ENCODE measurements at regions of chr12 and their contacts with region 1.

Region 1: DNA sequence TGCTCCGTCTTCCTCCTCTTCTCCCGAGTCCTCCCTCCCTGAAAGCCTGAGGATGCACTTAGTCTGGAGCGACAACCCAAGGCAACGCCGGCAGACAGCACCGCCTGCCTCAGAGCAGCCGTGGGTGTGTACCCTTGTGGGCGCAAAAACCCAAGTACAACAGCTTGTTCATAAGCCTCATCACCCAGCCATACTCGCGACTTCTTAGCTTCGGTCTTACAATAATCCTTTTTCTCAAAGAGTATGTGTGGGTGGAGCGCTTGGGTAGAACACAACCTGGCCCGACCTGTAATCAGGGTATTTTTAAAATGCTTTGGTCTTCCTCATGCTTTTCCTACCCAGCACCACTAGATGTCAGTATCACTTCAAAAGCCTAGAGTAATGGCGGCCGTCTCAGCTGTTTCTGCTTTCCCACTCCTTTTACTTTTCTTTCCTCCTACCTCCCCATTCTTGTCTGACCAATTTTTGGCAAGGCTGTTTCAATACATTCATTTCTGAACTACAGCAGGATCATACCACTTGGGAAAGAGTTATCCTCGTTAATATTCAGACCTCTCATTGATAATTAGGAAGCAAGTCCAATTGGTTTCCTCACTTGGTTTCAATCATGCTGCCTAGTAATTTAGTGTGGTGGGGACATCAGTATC is 198.9 kb downstream of the EPS8 start:
- DNase-seq: peak; percentile 56
- ATAC-seq: peak; percentile 98
- H3K4me3 Mint-ChIP-seq: peak overlapping the region; percentile 72
- H3K27ac Mint-ChIP-seq: peak overlapping the region; percentile 75
- H3K4me1 Mint-ChIP-seq: peaks cover 10% of the 10 kb centered on the region
- H3K27me3 Mint-ChIP-seq: no peaks in the 10 kb centered on the region
- CTCF ChIP-seq: peak; percentile 79

Region 2: DNA sequence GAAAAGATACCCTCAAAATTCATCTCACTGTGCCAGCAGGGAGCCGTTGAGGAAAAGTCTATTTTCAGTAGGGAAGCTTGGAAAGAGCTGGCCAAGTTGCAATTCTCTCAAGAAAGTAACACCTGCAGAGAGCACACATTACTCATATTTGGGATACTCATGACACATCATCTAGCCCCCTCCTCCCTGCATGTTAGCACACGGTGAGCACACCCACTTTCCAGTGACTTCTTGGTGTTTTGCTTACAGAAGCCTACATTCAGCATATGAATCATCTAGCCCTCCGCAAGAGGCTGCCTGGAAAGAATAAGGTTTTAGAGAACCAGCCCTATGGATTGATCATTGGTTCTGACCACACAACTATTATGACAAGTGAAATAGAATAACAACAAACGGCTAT is 143.5 kb before region 1 on chr12:
- CTCF ChIA-PET with region 1: no interaction called
- POLR2A ChIA-PET with region 1: no interaction called
- intact Hi-C with region 1: no loop called
- DNase-seq: peak; percentile 1
- ATAC-seq: peak; percentile 42
- H3K4me3 Mint-ChIP-seq: no peak overlapping the region
- H3K27ac Mint-ChIP-seq: no peak overlapping the region
- H3K4me1 Mint-ChIP-seq: no peaks in the 10 kb centered on the region
- H3K27me3 Mint-ChIP-seq: peaks cover 3% of the 10 kb centered on the region
- CTCF ChIP-seq: no peak

Region 3: DNA sequence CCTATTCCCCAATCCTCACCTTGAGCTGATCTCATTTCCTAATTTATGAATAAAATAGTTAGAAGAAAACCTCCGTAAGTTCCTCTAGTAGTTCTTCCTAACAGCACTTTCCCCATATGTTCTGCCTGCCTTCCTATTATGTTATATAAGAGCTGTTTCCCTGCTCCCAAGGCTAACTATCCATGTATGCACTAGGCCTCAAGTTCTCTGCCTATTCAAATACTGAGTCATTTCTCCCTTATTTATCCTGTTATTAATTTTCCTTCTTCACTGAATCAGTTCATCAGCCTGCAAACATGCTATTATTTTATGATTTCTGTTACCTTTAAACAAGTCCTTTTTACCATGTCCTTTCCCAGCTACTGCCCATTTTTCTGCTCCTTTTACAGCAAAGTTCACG is 34.8 kb after region 1 on chr12:
- CTCF ChIA-PET with region 1: no interaction called
- POLR2A ChIA-PET with region 1: no interaction called
- intact Hi-C with region 1: no loop called
- DNase-seq: no peak
- ATAC-seq: no peak
- H3K4me3 Mint-ChIP-seq: no peak overlapping the region
- H3K27ac Mint-ChIP-seq: no peak overlapping the region
- H3K4me1 Mint-ChIP-seq: no peaks in the 10 kb centered on the region
- H3K27me3 Mint-ChIP-seq: peaks cover 2% of the 10 kb centered on the region
- CTCF ChIP-seq: no peak

Region 4: DNA sequence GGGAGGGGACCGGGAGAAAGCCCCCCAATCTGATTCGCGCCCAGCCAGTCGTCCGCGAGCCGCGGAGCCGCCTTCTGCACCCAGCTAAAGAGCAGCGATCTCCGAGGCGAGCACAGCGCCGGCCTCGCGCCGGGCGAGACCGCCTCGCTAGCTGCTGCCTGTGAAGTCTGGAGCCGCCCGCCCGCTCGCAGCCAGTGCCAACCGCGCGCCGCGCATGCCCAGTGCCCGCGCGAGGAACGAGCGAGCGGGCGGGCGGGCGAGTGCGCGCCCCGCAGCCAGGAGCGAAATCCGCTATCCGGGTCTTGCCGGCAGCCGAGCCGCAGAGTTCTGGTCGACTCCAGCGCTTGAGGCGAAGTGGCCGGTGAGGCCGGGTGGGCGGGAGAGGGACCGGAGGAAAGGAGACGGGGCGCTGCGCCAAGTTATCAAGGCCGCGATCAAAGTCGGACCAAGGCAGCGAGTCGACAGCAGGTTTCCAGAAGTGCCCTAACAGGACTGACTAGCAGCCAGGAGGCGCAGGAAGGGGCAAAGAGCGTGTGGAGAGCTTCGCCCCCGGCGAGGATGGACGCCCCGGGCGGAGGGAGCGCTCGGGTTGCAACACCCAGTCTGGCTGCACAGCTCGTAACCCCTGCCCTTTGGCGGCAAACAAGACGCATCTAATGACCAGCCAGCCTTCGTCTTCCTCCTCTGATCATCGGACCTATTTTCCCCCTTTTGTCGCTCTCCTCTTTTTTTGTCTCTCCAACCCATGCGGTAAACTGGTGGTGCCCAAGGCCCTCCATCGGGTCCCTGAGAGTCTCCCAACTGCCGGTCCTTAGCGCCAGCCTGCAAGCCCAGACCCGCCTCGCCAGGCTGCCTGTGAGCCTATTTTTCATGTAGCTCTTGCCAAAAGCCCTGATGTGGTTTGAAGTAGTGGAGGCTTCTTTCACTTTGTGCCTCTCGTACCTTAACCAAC is 199.2 kb after region 1 on chr12 and contains the start of gene EPS8:
- CTCF ChIA-PET with region 1: interaction called, 12 read pairs
- POLR2A ChIA-PET with region 1: no interaction called
- intact Hi-C with region 1: loop called (anchors 5 kb)
- DNase-seq: peak; percentile 87
- ATAC-seq: peak; percentile 97
- H3K4me3 Mint-ChIP-seq: peak within 1 kb of the TSS; percentile 77
- H3K27ac Mint-ChIP-seq: peak within 1 kb of the TSS; percentile 25
- H3K4me1 Mint-ChIP-seq: peaks cover 16% of the 10 kb centered on the region
- H3K27me3 Mint-ChIP-seq: peaks cover 36% of the 10 kb centered on the region
- CTCF ChIP-seq: no peak
- total RNA-seq, gene EPS8: 1.8 to 2.3 TPM

Region 5: DNA sequence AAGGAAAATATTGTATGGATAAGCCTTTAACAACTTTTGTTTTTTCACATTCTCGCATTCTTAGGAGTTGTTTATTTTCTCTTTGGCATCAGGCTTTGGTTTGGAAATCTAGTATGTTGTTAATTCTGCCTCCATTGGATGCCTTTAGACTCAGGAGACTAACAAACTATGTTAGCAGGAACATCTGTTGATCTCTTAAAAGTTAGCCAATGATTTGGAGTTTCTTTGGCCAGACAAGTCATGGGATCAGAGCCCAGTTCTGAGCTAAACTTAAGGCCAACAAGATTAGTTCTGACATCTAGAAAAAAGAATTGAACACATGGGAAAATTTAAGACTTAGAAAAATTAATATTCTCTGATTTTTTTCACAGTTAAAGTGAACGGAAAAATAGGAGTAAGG is 256.6 kb after region 1 on chr12:
- CTCF ChIA-PET with region 1: interaction called, 13 read pairs
- POLR2A ChIA-PET with region 1: no interaction called
- intact Hi-C with region 1: no loop called
- DNase-seq: no peak
- ATAC-seq: no peak
- H3K4me3 Mint-ChIP-seq: no peak overlapping the region
- H3K27ac Mint-ChIP-seq: no peak overlapping the region
- H3K4me1 Mint-ChIP-seq: no peaks in the 10 kb centered on the region
- H3K27me3 Mint-ChIP-seq: no peaks in the 10 kb centered on the region
- CTCF ChIP-seq: no peak

Region 6: DNA sequence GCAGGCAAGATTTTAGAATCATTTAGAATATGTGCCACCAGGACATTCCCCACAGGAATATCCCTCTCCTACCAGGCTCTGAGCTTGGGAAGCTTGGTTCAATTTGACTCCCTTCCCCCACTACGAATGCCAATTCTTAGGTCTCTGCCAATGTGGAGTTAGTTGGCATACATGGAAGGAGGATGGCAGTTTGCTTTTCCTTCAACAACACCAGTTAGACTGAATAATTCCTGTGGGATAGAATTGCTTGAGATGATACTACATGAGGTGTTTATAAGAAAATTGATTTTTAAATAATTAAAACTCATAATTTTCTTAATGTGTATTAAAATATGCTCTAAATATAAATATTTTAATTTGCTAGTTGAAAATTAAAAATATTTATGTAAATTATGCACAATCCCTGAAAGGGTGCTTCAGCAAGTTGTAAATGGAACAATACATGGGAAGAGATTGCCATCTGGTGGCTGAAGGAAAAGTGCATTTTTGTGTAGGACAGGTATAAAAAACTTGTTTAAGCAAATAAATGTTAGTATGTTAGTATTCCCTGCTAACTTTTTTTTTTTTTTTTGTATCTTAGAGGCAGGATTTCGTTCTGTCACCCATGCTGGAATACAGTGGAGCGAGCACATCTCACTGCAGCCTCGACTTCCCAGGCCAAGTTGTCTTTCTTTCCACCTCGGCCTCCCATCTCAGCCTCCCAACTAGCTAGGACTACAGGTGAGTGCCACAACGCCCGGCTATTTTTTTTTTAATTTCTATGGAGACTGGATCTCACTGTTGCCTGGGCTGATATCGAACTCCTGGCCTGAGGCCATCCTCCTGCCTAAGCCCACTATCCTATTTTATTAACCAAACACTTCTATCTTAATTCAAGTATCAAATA is 266.0 kb after region 1 on chr12:
- CTCF ChIA-PET with region 1: interaction called, 93 read pairs
- POLR2A ChIA-PET with region 1: no interaction called
- intact Hi-C with region 1: loop called (anchors 1 kb)
- DNase-seq: peak; percentile 61
- ATAC-seq: peak; percentile 45
- H3K4me3 Mint-ChIP-seq: no peak overlapping the region
- H3K27ac Mint-ChIP-seq: no peak overlapping the region
- H3K4me1 Mint-ChIP-seq: no peaks in the 10 kb centered on the region
- H3K27me3 Mint-ChIP-seq: peaks cover 18% of the 10 kb centered on the region
- CTCF ChIP-seq: peak; percentile 78

Region 7: GRCh38 chr12:15899282-15899870 is 309.1 kb after region 1 on chr12:
- CTCF ChIA-PET with region 1: interaction called, 15 read pairs
- POLR2A ChIA-PET with region 1: interaction called, 3 read pairs
- intact Hi-C with region 1: no loop called
- DNase-seq: no peak
- ATAC-seq: peak; percentile 64
- H3K4me3 Mint-ChIP-seq: no peak overlapping the region
- H3K27ac Mint-ChIP-seq: no peak overlapping the region
- H3K4me1 Mint-ChIP-seq: peaks cover 5% of the 10 kb centered on the region
- H3K27me3 Mint-ChIP-seq: no peaks in the 10 kb centered on the region
- CTCF ChIP-seq: peak; percentile 88

Region 8: DNA sequence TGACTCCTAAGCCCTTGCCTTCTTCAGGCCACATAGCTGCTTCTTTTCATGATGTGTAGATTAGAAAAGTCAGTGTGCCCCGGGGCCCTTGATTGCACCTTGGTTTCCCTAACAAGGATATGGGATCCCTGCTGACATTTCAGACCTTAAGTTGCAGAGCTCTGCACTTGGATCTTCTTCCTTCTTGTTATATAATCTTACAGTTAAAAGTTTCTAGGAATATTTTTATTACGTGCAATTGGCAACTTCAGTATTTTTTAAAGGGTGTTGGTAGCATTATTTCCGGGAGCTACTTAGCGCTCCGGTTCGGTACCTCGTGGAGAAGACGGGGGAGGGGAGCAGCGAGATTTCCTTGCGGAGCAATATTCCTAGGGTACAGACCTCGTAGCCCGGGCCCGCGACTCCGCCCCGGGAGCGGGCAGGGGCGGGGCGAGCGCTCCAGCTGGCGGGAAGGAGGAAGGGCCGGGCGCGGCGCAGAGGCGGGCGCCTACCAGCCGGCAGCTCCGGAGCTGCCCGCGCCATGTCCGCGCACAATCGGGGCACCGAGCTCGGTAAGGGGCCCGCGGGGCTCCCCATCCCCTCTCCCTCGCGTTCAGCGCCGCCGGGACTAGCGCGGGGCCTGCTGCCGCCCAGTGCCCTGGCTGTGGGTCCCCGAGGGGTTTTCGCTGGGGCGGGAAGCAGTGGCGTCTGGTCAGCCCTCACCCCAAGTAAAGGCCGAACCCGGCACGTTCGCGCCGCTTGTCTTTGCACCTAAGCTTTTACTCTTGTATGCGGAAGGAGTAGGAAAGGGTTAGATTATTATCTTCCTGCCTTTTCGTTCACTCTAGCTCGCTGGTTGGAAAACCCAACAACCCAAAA is 320.8 kb after region 1 on chr12 and contains the start of gene DERA:
- CTCF ChIA-PET with region 1: interaction called, 10 read pairs
- POLR2A ChIA-PET with region 1: no interaction called
- intact Hi-C with region 1: no loop called
- DNase-seq: peak; percentile 57
- ATAC-seq: peak; percentile 89
- H3K4me3 Mint-ChIP-seq: peak within 1 kb of the TSS; percentile 80
- H3K27ac Mint-ChIP-seq: peak within 1 kb of the TSS; percentile 83
- H3K4me1 Mint-ChIP-seq: peaks cover 9% of the 10 kb centered on the region
- H3K27me3 Mint-ChIP-seq: no peaks in the 10 kb centered on the region
- CTCF ChIP-seq: no peak
- total RNA-seq, gene DERA: 24.5 to 28.3 TPM

Region 9: GRCh38 chr12:15966426-15966825 is 376.1 kb after region 1 on chr12:
- CTCF ChIA-PET with region 1: no interaction called
- POLR2A ChIA-PET with region 1: no interaction called
- intact Hi-C with region 1: no loop called
- DNase-seq: no peak
- ATAC-seq: no peak
- H3K4me3 Mint-ChIP-seq: no peak overlapping the region
- H3K27ac Mint-ChIP-seq: no peak overlapping the region
- H3K4me1 Mint-ChIP-seq: no peaks in the 10 kb centered on the region
- H3K27me3 Mint-ChIP-seq: no peaks in the 10 kb centered on the region
- CTCF ChIP-seq: no peak